Panc1 (cell line): ENCODE measurements at regions of chr5 and their contacts with region 1.

Region 1: GRCh38 chr5:94830520-94830919 is 212.1 kb downstream of the SLF1 start:
- DNase-seq: no peak
- ATAC-seq: no peak
- H3K4me3 ChIP-seq: no peak overlapping the region
- H3K27ac ChIP-seq: no peak overlapping the region
- H3K4me1 ChIP-seq: no peaks in the 10 kb centered on the region
- H3K27me3 ChIP-seq: no peaks in the 10 kb centered on the region
- CTCF ChIP-seq: peak; percentile 44; the same call in 1 of the 2 replicates

Region 2: GRCh38 chr5:93681432-93681831 is 1149.1 kb before region 1 on chr5:
- CTCF ChIA-PET with region 1: no interaction called
- POLR2A ChIA-PET with region 1: interaction called, 11 read pairs
- in situ Hi-C with region 1: no loop called
- intact Hi-C with region 1: no loop called
- DNase-seq: no peak
- ATAC-seq: no peak
- H3K4me3 ChIP-seq: no peak overlapping the region
- H3K27ac ChIP-seq: no peak overlapping the region
- H3K4me1 ChIP-seq: no peaks in the 10 kb centered on the region
- H3K27me3 ChIP-seq: no peaks in the 10 kb centered on the region
- CTCF ChIP-seq: peak; percentile 49; the same call in 1 of the 2 replicates

Region 3: GRCh38 chr5:94725142-94725541 is 105.4 kb before region 1 on chr5:
- CTCF ChIA-PET with region 1: no interaction called
- POLR2A ChIA-PET with region 1: no interaction called
- in situ Hi-C with region 1: no loop called
- intact Hi-C with region 1: no loop called
- DNase-seq: no peak
- ATAC-seq: no peak
- H3K4me3 ChIP-seq: no peak overlapping the region
- H3K27ac ChIP-seq: no peak overlapping the region
- H3K4me1 ChIP-seq: no peaks in the 10 kb centered on the region
- H3K27me3 ChIP-seq: no peaks in the 10 kb centered on the region
- CTCF ChIP-seq: no peak

Region 4: DNA sequence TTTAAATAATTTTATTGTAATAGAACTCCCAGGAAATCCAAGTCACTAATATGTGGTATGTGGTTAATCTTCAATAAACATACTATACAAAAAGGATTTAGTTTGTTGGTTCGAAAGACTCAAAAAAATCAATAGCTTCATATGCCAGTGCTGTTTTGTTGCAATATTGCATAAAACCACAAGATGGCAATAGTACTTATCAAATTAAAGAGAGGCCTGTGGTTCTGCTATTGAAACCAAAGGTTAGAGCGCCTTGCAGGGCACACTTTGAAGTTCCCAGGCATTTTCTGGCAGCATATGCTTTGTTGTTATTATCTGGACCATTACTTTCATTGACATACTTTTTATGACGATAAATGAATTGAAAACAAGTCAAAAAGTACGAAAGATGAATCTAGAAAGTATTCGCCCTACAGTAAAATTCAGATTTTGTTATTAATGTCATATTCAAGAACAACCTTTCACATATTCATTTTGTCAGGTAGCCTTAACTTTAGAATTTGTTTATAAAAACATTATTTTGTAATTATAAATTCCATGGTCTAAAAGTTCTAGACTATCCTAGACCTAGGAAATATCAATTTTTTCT is 138.1 kb after region 1 on chr5:
- CTCF ChIA-PET with region 1: no interaction called
- POLR2A ChIA-PET with region 1: no interaction called
- in situ Hi-C with region 1: no loop called
- intact Hi-C with region 1: no loop called
- DNase-seq: peak; percentile 33
- ATAC-seq: peak; percentile 93
- H3K4me3 ChIP-seq: no peak overlapping the region
- H3K27ac ChIP-seq: no peak overlapping the region
- H3K4me1 ChIP-seq: no peaks in the 10 kb centered on the region
- H3K27me3 ChIP-seq: no peaks in the 10 kb centered on the region
- CTCF ChIP-seq: peak; percentile 65; the same call in 1 of the 2 replicates